CD8-positive, alpha-beta memory T cell (primary cell): ENCODE measurements at regions of chr20 and their contacts with region 1.

Region 1: DNA sequence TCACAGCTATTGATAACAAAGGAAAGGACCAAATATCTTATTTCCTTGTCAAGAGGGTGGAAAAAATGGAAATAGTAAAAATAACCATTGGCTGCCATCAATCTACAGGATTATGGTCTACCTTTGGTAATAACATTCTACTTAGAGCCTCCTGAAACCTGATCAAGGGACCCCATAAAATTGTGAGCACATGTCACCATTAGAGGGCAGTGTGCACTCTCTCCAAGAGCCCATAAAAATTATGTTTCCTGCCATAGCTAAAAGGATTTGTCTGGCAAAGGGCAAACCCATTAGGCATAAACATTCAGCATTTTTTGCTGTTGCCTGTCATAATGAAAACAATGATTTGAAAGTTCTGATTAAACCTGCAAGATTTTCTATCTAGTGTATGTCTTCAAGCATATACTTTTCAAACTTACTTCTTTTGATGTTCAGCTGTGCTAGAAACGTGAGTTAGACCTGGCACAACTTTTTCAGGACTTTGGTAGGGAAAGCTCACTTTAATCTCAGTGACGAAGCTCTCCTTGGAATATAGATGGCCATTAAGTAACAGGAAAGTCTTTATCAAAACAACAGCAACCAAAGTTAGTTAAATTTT is 120.7 kb upstream of the ZFP64 start:
- DNase-seq: peak; percentile 4 to 66 (median 49)
- H3K4me3 ChIP-seq: no peak overlapping the region
- H3K4me3 Mint-ChIP-seq: no peak overlapping the region
- H3K27ac ChIP-seq: no peak overlapping the region
- H3K27ac Mint-ChIP-seq: no peak overlapping the region
- H3K4me1 ChIP-seq: peaks cover 12% of the 10 kb centered on the region
- H3K4me1 Mint-ChIP-seq: peaks cover 6 to 18% (median 11%) of the 10 kb centered on the region in 3 donors
- H3K27me3 ChIP-seq: no peaks in the 10 kb centered on the region
- H3K27me3 Mint-ChIP-seq: peaks cover 0 to 11% of the 10 kb centered on the region in 2 donors

Region 2: DNA sequence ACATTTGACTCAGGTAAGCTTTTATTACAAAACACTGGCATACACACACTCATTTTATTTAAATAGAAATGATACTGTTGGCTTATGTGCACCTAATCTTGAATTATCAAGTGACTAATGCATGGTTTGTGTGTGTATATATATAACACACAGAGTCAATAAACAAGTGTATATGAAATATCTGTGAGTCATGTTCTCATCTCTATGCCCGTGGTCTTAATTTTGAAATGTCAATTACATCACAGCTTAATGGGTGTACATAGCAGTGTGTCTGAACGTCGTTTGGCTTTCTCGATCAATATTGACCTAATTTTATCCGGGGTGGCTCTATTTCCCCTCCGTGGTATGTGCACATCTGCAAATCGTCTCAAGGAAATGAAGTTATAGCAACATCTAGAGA is 16.7 kb before region 1 on chr20:
- CTCF ChIA-PET with region 1: interaction called, 10 read pairs
- POLR2A ChIA-PET with region 1: no interaction called
- DNase-seq: no peak
- H3K4me3 ChIP-seq: no peak overlapping the region
- H3K4me3 Mint-ChIP-seq: no peak overlapping the region
- H3K27ac ChIP-seq: no peak overlapping the region
- H3K27ac Mint-ChIP-seq: no peak overlapping the region
- H3K4me1 ChIP-seq: no peaks in the 10 kb centered on the region
- H3K4me1 Mint-ChIP-seq: no peaks in the 10 kb centered on the region
- H3K27me3 ChIP-seq: no peaks in the 10 kb centered on the region
- H3K27me3 Mint-ChIP-seq: peaks cover 3 to 5% of the 10 kb centered on the region in 2 donors

Region 3: DNA sequence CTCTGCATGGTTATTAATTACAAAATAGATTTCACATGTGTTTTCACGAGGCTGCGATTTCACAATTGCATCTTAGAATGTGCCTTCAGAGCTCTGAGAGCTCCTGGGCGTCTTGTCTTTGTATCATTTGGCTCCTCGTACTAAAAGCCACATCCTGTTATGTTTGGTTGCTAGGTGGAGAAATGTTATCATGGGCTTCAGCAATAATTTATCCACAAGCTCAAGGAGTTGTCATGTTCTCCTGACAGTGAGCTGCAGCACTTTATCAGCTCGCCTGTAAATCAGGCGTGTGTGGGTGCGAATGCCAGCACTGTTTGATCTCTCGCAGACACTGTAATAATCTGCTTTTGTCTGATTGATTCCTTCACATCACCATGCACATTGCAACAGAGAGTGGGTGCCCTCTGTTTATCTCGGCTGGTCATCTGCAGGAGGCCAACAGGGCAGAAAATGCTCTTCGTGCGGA is 98.0 kb after region 1 on chr20:
- CTCF ChIA-PET with region 1: interaction called, 13 read pairs
- POLR2A ChIA-PET with region 1: interaction called, 3 read pairs
- DNase-seq: peak; percentile 16 to 89 (median 82)
- H3K4me3 ChIP-seq: peak overlapping the region; percentile 33
- H3K4me3 Mint-ChIP-seq: peak overlapping the region; percentile 45 to 88 (median 78)
- H3K27ac ChIP-seq: peak overlapping the region; percentile 73
- H3K27ac Mint-ChIP-seq: peak overlapping the region; percentile 95 to 99 (median 98)
- H3K4me1 ChIP-seq: peaks cover 73% of the 10 kb centered on the region
- H3K4me1 Mint-ChIP-seq: peaks cover 71 to 90% (median 86%) of the 10 kb centered on the region in 3 donors
- H3K27me3 ChIP-seq: no peaks in the 10 kb centered on the region
- H3K27me3 Mint-ChIP-seq: no peaks in the 10 kb centered on the region

Region 4: GRCh38 chr20:52438324-52438963 is 126.2 kb after region 1 on chr20:
- CTCF ChIA-PET with region 1: interaction called, 16 read pairs
- POLR2A ChIA-PET with region 1: no interaction called
- DNase-seq: peak in 3 of 5 donors; percentile 6 to 53 (median 38)
- H3K4me3 ChIP-seq: no peak overlapping the region
- H3K4me3 Mint-ChIP-seq: peak overlapping the region in 4 of 7 donors; percentile 49 to 76 (median 66)
- H3K27ac ChIP-seq: no peak overlapping the region
- H3K27ac Mint-ChIP-seq: peak overlapping the region in 6 of 8 donors; percentile 51 to 93 (median 76)
- H3K4me1 ChIP-seq: no peaks in the 10 kb centered on the region
- H3K4me1 Mint-ChIP-seq: peaks cover 7 to 13% (median 12%) of the 10 kb centered on the region in 3 donors
- H3K27me3 ChIP-seq: no peaks in the 10 kb centered on the region
- H3K27me3 Mint-ChIP-seq: peaks cover 1 to 10% of the 10 kb centered on the region in 2 donors

Region 5: DNA sequence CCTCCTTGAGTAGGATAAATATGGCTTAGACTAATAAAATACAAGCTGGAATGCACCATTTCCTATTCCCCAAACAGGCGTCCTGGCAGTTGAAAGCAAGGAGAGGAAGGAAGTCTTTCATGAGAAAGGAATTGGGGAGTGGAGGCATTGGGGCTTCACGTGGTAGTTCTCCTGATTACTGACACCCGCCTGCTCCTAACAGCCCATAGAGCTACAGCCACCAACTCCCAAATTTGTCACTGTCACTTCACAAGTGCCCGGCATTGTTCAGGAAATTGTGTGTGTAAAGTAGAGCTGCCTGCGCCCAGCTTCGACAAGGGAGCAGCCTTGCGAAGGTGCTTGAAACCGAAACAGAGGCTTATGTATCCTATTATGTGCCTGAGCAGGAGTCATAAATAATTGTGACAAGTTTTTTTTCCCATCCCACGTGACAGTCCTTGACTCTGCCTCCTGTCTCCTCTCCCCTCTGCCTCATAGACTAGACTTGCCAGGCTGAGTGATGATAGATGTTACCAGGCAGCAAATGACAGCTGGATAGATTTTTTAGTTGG is 181.0 kb after region 1 on chr20:
- CTCF ChIA-PET with region 1: no interaction called
- POLR2A ChIA-PET with region 1: no interaction called
- DNase-seq: no peak
- H3K4me3 ChIP-seq: no peak overlapping the region
- H3K4me3 Mint-ChIP-seq: peak overlapping the region in 6 of 7 donors; percentile 33 to 66 (median 52)
- H3K27ac ChIP-seq: no peak overlapping the region
- H3K27ac Mint-ChIP-seq: peak overlapping the region in 2 of 8 donors; percentile 6 to 28
- H3K4me1 ChIP-seq: peaks cover 15% of the 10 kb centered on the region
- H3K4me1 Mint-ChIP-seq: peaks cover 12 to 21% (median 18%) of the 10 kb centered on the region in 3 donors
- H3K27me3 ChIP-seq: no peaks in the 10 kb centered on the region
- H3K27me3 Mint-ChIP-seq: peaks cover 24 to 34% of the 10 kb centered on the region in 2 donors

Region 6: DNA sequence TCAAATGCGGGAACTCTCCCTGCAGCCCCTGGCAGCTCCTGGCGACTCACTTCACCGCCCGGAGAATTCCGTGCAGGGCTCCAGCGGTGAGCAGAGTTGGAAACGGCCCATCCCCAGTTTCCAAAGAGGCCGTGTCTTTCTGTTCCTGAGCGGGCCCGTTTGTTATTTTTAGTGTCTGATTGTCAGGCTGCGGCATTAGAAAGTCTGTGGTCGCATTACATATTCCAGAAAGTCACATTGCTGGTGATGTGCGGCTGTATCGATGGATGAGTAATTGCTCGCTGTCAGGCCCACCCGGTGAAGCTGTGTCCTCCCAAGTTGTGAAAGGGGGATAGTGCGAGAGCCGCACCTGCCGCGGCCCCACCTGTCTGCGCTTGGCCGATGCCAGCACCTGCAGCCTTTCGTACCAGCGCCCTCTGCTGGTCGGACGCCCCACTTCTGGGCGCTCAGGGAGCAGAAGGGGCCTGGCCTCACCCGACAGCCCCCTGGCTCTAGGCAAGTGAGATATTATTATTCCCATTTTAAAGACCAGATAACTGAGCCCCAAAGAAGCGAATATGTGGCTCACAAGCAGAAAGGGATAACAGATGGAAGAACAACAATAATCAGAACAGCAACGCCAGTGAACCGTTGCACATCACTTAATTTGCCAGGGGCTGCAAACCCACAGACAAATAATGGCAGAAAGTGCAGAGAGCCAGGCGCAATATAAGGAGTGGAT is 904.8 kb after region 1 on chr20:
- CTCF ChIA-PET with region 1: interaction called, 12 read pairs
- POLR2A ChIA-PET with region 1: no interaction called
- DNase-seq: peak; percentile 55 to 79 (median 72)
- H3K4me3 ChIP-seq: peak overlapping the region; percentile 14
- H3K4me3 Mint-ChIP-seq: peak overlapping the region in 4 of 7 donors; percentile 33 to 65 (median 44)
- H3K27ac ChIP-seq: no peak overlapping the region
- H3K27ac Mint-ChIP-seq: peak overlapping the region in 1 of 8 donors; percentile 48
- H3K4me1 ChIP-seq: peaks cover 27% of the 10 kb centered on the region
- H3K4me1 Mint-ChIP-seq: peaks cover 4 to 39% (median 20%) of the 10 kb centered on the region in 3 donors
- H3K27me3 ChIP-seq: no peaks in the 10 kb centered on the region
- H3K27me3 Mint-ChIP-seq: peaks cover 6 to 44% of the 10 kb centered on the region in 2 donors